ENCODE measurements at regions of chr19 and their contacts with region 1.

Region 1: DNA sequence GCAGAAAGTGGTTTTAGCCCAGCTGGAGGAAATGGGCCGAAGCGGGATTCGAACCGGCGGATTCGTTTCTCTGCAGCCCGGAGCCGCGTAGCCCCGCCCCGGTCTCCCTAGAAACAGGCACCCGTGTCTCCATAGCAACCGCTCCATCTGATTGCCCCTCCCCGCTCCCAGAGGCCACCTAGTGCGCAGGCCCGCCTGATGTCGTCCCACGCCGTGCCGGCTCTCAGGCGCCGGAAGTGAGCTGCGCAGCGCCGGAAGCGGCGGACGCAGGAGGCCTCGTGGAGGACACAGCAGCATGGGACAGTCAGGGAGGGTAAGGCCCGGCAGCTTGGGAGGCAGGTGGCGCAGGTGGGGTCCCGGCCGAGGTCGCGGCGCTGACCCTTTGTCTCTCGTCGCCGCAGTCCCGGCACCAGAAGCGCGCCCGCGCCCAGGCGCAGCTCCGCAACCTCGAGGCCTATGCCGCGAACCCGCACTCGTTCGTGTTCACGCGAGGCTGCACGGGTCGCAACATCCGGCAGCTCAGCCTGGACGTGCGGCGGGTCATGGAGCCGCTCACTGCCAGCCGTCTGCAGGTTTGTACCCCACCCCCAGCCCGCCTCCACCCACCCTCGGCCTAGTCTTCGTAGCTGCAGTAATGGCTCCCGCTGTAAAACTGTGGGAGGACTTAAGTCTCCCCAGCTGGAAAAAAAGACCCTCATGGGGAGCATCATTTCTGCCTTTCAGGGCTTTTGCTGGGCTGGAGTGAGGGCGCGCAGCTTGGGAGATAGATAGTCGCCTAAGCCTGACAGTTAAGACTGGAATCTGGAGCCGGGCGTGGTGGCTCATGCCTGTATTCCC is at the start of gene PPAN:
- DNase-seq: peak; percentile 97 to 99 (median 99)
- H3K4me3 ChIP-seq: peak within 1 kb of the TSS; percentile 47 to 99 (median 78)
- H3K27ac ChIP-seq: peak within 1 kb of the TSS; percentile 90 to 93
- H3K4me1 ChIP-seq: peaks cover 16 to 78% (median 64%) of the 10 kb centered on the region in 4 experiments
- H3K27me3 ChIP-seq: no peaks in the 10 kb centered on the region

Region 2: DNA sequence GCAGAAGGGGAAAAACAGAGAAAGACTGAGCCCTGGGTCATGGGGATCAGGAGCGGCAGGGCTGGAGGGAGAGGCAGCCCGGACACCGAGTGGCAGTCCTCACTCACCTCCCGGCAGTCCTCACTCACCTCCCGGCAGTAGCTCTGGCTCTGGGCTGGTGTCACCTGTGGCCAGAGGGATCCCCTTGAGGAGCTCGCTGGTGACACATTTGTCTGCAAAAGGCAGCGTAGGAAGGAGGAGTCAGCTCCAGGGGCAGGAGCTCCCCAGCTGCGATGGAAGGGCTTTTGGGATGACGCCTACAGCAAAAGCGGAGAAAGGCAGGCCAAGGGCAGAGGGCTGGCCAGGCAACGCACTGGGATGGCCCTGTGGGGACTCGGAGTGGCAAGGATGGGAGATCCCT is 12.6 kb after region 1 on chr19:
- CTCF ChIA-PET with region 1: interaction called, 13 read pairs
- POLR2A ChIA-PET with region 1: interaction called, 8 read pairs
- DNase-seq: no peak
- H3K4me3 ChIP-seq: peak overlapping the region; percentile 76 to 99 (median 86)
- H3K27ac ChIP-seq: peak overlapping the region; percentile 69 to 89
- H3K4me1 ChIP-seq: peaks cover 0 to 17% (median 9%) of the 10 kb centered on the region in 4 experiments
- H3K27me3 ChIP-seq: no peaks in the 10 kb centered on the region

Region 3: GRCh38 chr19:10137751-10138682 is 31.7 kb after region 1 on chr19:
- CTCF ChIA-PET with region 1: no interaction called
- POLR2A ChIA-PET with region 1: no interaction called
- DNase-seq: no peak
- H3K4me3 ChIP-seq: no peak overlapping the region
- H3K27ac ChIP-seq: no peak overlapping the region
- H3K4me1 ChIP-seq: no peaks in the 10 kb centered on the region
- H3K27me3 ChIP-seq: no peaks in the 10 kb centered on the region

Measured in common myeloid progenitor, CD34-positive (primary cell).